SK-N-SH (cell line): ENCODE measurements at regions of chr17 and their contacts with region 1.

Region 1: DNA sequence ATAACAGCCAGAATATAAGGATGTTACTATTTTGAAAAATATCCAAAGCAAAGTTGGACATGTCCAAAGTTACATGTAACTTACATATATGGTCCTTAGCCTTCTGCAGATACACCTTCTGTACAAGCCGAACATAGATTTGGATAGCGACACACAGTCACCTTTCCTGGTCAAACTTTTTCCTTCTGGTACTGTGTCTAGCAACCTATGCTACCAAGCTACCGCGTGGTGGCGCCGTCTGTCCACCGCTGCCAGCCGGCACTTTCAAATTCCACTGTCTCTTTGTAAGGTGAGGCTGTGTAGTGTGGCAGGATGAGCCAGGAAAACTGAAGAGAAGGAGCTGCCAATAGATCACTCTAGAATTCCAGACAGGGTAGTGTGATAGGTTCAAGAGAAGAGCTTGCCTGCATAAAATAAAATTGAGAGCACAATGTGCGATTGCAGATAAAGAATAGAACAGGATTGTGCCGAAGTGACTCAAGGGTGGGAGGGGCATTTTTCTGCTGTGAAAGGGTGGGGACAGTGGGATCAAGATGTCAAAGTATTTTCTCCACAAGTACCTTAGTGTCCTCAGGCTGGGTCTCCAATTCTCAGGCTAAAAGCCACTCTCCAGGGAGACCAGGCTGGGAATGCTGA is 366.9 kb downstream of the SLC39A11 start:
- DNase-seq: peak; percentile 78
- H3K4me3 ChIP-seq: no peak overlapping the region
- H3K27ac ChIP-seq: no peak overlapping the region
- H3K4me1 ChIP-seq: no peaks in the 10 kb centered on the region
- H3K27me3 ChIP-seq: no peaks in the 10 kb centered on the region
- CTCF ChIP-seq: peak; percentile 100
- EP300 ChIP-seq: no peak
- RAD21 ChIP-seq: peak; percentile 99

Region 2: GRCh38 chr17:72545766-72546165 is 179.8 kb before region 1 on chr17:
- CTCF ChIA-PET with region 1: interaction called, 16 read pairs
- POLR2A ChIA-PET with region 1: no interaction called
- DNase-seq: no peak
- H3K4me3 ChIP-seq: no peak overlapping the region
- H3K27ac ChIP-seq: no peak overlapping the region
- H3K4me1 ChIP-seq: peaks cover 0 to under 1% of the 10 kb centered on the region in 2 experiments; a peak in 1 of 4 replicates
- H3K27me3 ChIP-seq: no peaks in the 10 kb centered on the region
- CTCF ChIP-seq: no peak
- EP300 ChIP-seq: no peak
- RAD21 ChIP-seq: no peak

Region 3: GRCh38 chr17:72687886-72688285 is 37.7 kb before region 1 on chr17:
- CTCF ChIA-PET with region 1: interaction called, 39 read pairs
- POLR2A ChIA-PET with region 1: no interaction called
- DNase-seq: no peak
- H3K4me3 ChIP-seq: no peak overlapping the region
- H3K27ac ChIP-seq: no peak overlapping the region
- H3K4me1 ChIP-seq: peaks cover 5 to 36% of the 10 kb centered on the region in 2 experiments
- H3K27me3 ChIP-seq: no peaks in the 10 kb centered on the region
- CTCF ChIP-seq: no peak
- EP300 ChIP-seq: no peak
- RAD21 ChIP-seq: no peak

Region 4: GRCh38 chr17:72743037-72743467 is 17.5 kb after region 1 on chr17:
- CTCF ChIA-PET with region 1: interaction called, 19 read pairs
- POLR2A ChIA-PET with region 1: no interaction called
- DNase-seq: no peak
- H3K4me3 ChIP-seq: no peak overlapping the region
- H3K27ac ChIP-seq: no peak overlapping the region
- H3K4me1 ChIP-seq: no peaks in the 10 kb centered on the region
- H3K27me3 ChIP-seq: no peaks in the 10 kb centered on the region
- CTCF ChIP-seq: no peak
- EP300 ChIP-seq: no peak
- RAD21 ChIP-seq: no peak

Region 5: GRCh38 chr17:72922219-72922618 is 196.7 kb after region 1 on chr17:
- CTCF ChIA-PET with region 1: interaction called, 14 read pairs
- POLR2A ChIA-PET with region 1: no interaction called
- DNase-seq: no peak
- H3K4me3 ChIP-seq: no peak overlapping the region
- H3K27ac ChIP-seq: no peak overlapping the region
- H3K4me1 ChIP-seq: no peaks in the 10 kb centered on the region
- H3K27me3 ChIP-seq: no peaks in the 10 kb centered on the region
- CTCF ChIP-seq: no peak
- EP300 ChIP-seq: no peak
- RAD21 ChIP-seq: no peak

Region 6: DNA sequence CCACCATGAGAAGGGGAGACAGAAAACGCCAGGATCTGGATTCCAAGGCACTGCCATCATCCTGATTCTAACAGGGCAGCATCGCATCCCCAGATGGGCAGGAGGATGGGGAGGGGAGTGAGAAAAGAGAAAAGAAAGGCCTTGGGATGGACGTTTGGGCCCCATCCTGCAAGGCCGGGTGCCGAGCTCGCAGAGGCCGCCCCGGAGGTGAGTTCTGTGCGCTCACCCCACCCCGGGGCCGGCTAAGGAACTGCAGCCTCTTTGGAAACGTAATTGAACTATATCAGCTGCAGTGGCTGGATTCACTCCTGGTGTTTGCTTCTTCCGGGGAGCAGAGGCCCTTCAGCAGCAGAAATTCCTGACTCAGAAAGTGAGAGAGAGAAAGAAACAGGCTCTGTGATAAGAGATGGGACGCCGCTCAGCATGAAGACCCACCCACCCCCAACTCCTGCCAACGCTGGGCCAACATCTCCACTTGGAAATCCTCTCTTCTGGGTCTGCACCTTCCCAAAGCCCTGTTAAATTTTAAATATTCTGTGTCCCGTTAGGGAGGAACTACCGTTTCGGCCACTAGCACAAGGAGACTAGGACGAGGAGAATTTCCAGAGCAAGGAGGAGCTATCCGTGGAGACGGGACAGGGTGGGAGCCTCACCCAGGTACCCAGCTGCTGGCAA is 430.8 kb after region 1 on chr17:
- CTCF ChIA-PET with region 1: interaction called, 104 read pairs
- POLR2A ChIA-PET with region 1: interaction called, 5 read pairs
- DNase-seq: peak; percentile 92
- H3K4me3 ChIP-seq: peak overlapping the region in 1 of 2 experiments; percentile 31; a peak in 2 of 4 replicates
- H3K27ac ChIP-seq: peak overlapping the region in 1 of 2 experiments; percentile 45; a peak in 1 of 4 replicates
- H3K4me1 ChIP-seq: peaks cover 6 to 22% of the 10 kb centered on the region in 2 experiments; a peak in 1 of 4 replicates
- H3K27me3 ChIP-seq: no peaks in the 10 kb centered on the region
- CTCF ChIP-seq: peak; percentile 89
- EP300 ChIP-seq: 0 out of 4 replicates have a peak, but pooled peaks have one; percentile 9 to 24
- RAD21 ChIP-seq: peak; percentile 90

Region 7: DNA sequence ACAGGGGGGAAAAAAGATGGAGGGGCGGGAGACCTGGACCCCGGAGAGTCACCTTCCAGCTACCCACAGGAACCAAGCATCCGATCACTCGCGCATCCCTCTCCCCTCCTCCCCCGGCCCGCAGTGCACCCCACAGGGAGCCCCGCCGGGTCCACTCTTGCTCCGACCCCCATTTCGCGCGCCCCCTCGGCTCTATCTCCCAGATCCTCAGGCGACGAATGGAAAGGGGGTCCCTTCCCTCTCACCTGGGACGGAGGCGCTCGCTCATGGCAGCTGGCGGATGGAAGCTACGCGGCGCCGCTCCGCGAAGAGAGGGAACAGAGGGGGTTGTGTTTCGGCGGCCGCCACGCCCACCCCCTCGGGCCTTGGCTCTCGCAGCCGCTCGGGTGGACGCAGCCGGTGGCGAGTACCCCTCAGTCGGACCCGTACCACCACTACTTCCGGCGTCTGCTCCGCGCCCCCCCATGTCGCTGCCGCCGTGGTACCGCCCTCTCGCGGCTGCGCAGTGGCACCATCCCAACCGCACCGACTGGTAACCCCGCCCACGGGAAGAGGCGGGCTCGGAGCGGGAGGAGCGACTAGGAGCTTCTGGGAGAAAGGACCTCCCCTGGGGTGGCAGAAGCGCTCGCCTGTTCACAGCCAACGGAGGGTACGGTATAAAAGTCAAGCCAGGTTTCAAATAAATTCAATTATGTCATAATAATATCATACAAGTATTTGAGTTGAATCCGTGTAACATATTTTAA is 506.5 kb after region 1 on chr17:
- CTCF ChIA-PET with region 1: interaction called, 15 read pairs
- POLR2A ChIA-PET with region 1: no interaction called
- DNase-seq: peak; percentile 100
- H3K4me3 ChIP-seq: peak overlapping the region; percentile 97 to 98
- H3K27ac ChIP-seq: peak overlapping the region; percentile 59 to 87
- H3K4me1 ChIP-seq: peaks cover 24 to 29% of the 10 kb centered on the region in 2 experiments
- H3K27me3 ChIP-seq: no peaks in the 10 kb centered on the region
- CTCF ChIP-seq: peak; percentile 10; the same call in 1 of the 2 replicates
- EP300 ChIP-seq: peak in 1 of 2 experiments; percentile 47; a peak in 2 of 4 replicates
- RAD21 ChIP-seq: 0 out of 2 replicates have a peak, but pooled peaks have one; percentile 24